MCF 10A (cell line): ENCODE measurements at regions of chr14 and their contacts with region 1.

Region 1: GRCh38 chr14:68685419-68686204 is 107.3 kb downstream of the ZFP36L1 start:
- DNase-seq: peak; percentile 91
- H3K4me3 Mint-ChIP-seq: peak overlapping the region; percentile 1
- H3K27ac Mint-ChIP-seq: peak overlapping the region; percentile 96
- H3K4me1 Mint-ChIP-seq: peaks cover 67% of the 10 kb centered on the region
- H3K27me3 Mint-ChIP-seq: no peaks in the 10 kb centered on the region
- CTCF ChIP-seq: no peak

Region 2: GRCh38 chr14:68408680-68409079 is 276.9 kb before region 1 on chr14:
- CTCF ChIA-PET with region 1: interaction called, 3 read pairs
- POLR2A ChIA-PET with region 1: no interaction called
- intact Hi-C with region 1: loop called (anchors 10 kb)
- DNase-seq: no peak
- H3K4me3 Mint-ChIP-seq: no peak overlapping the region
- H3K27ac Mint-ChIP-seq: no peak overlapping the region
- H3K4me1 Mint-ChIP-seq: peaks cover 19% of the 10 kb centered on the region
- H3K27me3 Mint-ChIP-seq: no peaks in the 10 kb centered on the region
- CTCF ChIP-seq: no peak

Region 3: GRCh38 chr14:68577827-68578541 is 107.6 kb before region 1 on chr14:
- CTCF ChIA-PET with region 1: no interaction called
- POLR2A ChIA-PET with region 1: interaction called, 4 read pairs
- intact Hi-C with region 1: loop called (anchors 5 kb)
- DNase-seq: peak; percentile 93
- H3K4me3 Mint-ChIP-seq: peak overlapping the region; percentile 61
- H3K27ac Mint-ChIP-seq: peak overlapping the region; percentile 97
- H3K4me1 Mint-ChIP-seq: peaks cover 42% of the 10 kb centered on the region
- H3K27me3 Mint-ChIP-seq: no peaks in the 10 kb centered on the region
- CTCF ChIP-seq: no peak

Region 4: GRCh38 chr14:68622856-68623255 is 62.8 kb before region 1 on chr14:
- CTCF ChIA-PET with region 1: no interaction called
- POLR2A ChIA-PET with region 1: no interaction called
- intact Hi-C with region 1: no loop called
- DNase-seq: no peak
- H3K4me3 Mint-ChIP-seq: no peak overlapping the region
- H3K27ac Mint-ChIP-seq: no peak overlapping the region
- H3K4me1 Mint-ChIP-seq: no peaks in the 10 kb centered on the region
- H3K27me3 Mint-ChIP-seq: no peaks in the 10 kb centered on the region
- CTCF ChIP-seq: no peak

Region 5: DNA sequence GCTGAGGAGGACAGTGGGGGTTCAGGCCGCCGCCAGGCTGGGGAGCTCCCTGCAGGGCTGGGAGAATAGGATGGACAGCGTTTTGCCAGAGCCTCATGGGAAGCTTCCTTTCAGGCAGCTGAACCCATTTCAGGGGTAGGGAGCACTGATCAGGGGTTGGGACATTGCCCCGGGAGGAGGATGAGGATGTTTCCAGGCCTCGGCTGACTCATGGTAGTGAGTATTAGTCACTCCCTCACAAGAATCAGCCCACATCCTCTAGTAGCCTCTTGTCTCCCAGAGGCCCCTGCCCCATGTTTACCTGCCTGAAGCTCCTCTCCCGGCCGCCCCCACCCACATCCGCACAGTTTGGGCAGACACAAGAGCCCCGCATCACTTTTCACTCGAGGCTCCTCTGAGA is 17.5 kb after region 1 on chr14:
- CTCF ChIA-PET with region 1: interaction called, 4 read pairs
- POLR2A ChIA-PET with region 1: interaction called, 19 read pairs
- intact Hi-C with region 1: no loop called
- DNase-seq: peak; percentile 91
- H3K4me3 Mint-ChIP-seq: no peak overlapping the region
- H3K27ac Mint-ChIP-seq: peak overlapping the region; percentile 67
- H3K4me1 Mint-ChIP-seq: peaks cover 43% of the 10 kb centered on the region
- H3K27me3 Mint-ChIP-seq: no peaks in the 10 kb centered on the region
- CTCF ChIP-seq: no peak

Region 6: GRCh38 chr14:68780358-68781160 is 94.9 kb after region 1 on chr14:
- CTCF ChIA-PET with region 1: interaction called, 4 read pairs
- POLR2A ChIA-PET with region 1: interaction called, 229 read pairs
- intact Hi-C with region 1: loop called (anchors 2 kb)
- DNase-seq: no peak
- H3K4me3 Mint-ChIP-seq: no peak overlapping the region
- H3K27ac Mint-ChIP-seq: peak overlapping the region; percentile 53
- H3K4me1 Mint-ChIP-seq: peaks cover 38% of the 10 kb centered on the region
- H3K27me3 Mint-ChIP-seq: no peaks in the 10 kb centered on the region
- CTCF ChIP-seq: no peak